ENCODE measurements at regions of chr6 and their contacts with region 1.

Region 1: GRCh38 chr6:141988954-141989705 is 143.6 kb upstream of the GJE1 start:
- DNase-seq: no peak
- ATAC-seq: no peak
- H3K4me3 ChIP-seq: no peak overlapping the region
- H3K27ac ChIP-seq: no peak overlapping the region
- H3K4me1 ChIP-seq: no peaks in the 10 kb centered on the region
- H3K27me3 ChIP-seq: no peaks in the 10 kb centered on the region
- CTCF ChIP-seq: peak; percentile 37

Region 2: DNA sequence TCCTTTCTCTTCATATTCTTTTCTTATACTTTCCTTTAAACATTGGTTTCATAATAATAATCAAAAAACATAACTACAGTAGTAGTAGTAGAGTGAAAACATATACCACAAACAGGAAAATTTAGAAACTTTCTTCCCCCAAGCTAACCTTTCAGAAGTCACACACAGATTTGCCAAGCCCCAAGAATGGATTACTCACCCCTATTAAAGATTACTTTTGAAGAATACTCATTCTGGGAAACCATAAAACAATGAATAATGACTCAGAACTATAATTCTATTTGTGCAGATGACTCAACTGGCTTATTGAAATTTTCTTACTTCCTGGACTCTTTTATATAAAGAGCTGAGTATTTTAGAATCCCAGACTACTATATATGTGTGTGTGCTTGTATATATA is 24.2 kb after region 1 on chr6:
- intact Hi-C with region 1: no loop called
- DNase-seq: no peak
- ATAC-seq: no peak
- H3K4me3 ChIP-seq: no peak overlapping the region
- H3K27ac ChIP-seq: no peak overlapping the region
- H3K4me1 ChIP-seq: no peaks in the 10 kb centered on the region
- H3K27me3 ChIP-seq: no peaks in the 10 kb centered on the region
- CTCF ChIP-seq: no peak

Region 3: DNA sequence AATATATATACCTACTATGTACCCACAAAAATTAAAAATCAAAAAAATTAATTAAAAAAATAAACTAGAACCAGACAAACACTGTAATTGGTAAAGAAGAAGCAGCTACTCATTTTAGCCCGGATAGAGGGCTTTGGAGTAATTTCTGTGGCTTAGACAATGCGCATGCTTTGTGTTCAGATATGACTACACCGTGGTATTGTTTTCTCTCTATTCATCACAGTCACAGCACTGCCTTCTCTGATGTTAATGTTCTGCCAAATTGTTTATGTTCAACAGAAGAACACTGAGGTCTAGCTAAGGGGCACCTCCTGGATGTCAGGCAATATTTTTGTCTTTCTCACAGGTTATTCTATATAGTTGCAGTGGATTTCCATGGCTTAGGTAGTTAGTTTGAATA is 66.1 kb after region 1 on chr6:
- intact Hi-C with region 1: no loop called
- DNase-seq: no peak
- ATAC-seq: no peak
- H3K4me3 ChIP-seq: no peak overlapping the region
- H3K27ac ChIP-seq: no peak overlapping the region
- H3K4me1 ChIP-seq: no peaks in the 10 kb centered on the region
- H3K27me3 ChIP-seq: no peaks in the 10 kb centered on the region
- CTCF ChIP-seq: no peak

Region 4: GRCh38 chr6:142112451-142113061 is 123.4 kb after region 1 on chr6:
- intact Hi-C with region 1: loop called in 1 of 2 experiments (anchors 10 kb)
- DNase-seq: peak; percentile 42 to 72
- ATAC-seq: no peak
- H3K4me3 ChIP-seq: no peak overlapping the region
- H3K27ac ChIP-seq: no peak overlapping the region
- H3K4me1 ChIP-seq: no peaks in the 10 kb centered on the region
- H3K27me3 ChIP-seq: no peaks in the 10 kb centered on the region
- CTCF ChIP-seq: peak; percentile 65

Region 5: GRCh38 chr6:142367501-142368018 is 378.4 kb after region 1 on chr6:
- intact Hi-C with region 1: no loop called
- DNase-seq: no peak
- ATAC-seq: no peak
- H3K4me3 ChIP-seq: no peak overlapping the region
- H3K27ac ChIP-seq: no peak overlapping the region
- H3K4me1 ChIP-seq: no peaks in the 10 kb centered on the region
- H3K27me3 ChIP-seq: no peaks in the 10 kb centered on the region
- CTCF ChIP-seq: no peak